ENCODE measurements at regions of chr15 and their contacts with region 1.

Region 1: GRCh38 chr15:66293419-66294156 is at the start of gene DIS3L:
- DNase-seq: peak; percentile 21 to 83 (median 60)
- ATAC-seq: peak; percentile 72
- H3K4me3 ChIP-seq: peak within 1 kb of the TSS; percentile 67 to 72
- H3K4me3 Mint-ChIP-seq: peak within 1 kb of the TSS; percentile 86
- H3K27ac ChIP-seq: peak within 1 kb of the TSS; percentile 86 to 95
- H3K27ac Mint-ChIP-seq: peak within 1 kb of the TSS; percentile 93
- H3K4me1 ChIP-seq: peaks cover 39% of the 10 kb centered on the region
- H3K4me1 Mint-ChIP-seq: peaks cover 49% of the 10 kb centered on the region
- H3K27me3 ChIP-seq: no peaks in the 10 kb centered on the region
- H3K27me3 Mint-ChIP-seq: no peaks in the 10 kb centered on the region
- CTCF ChIP-seq: no peak
- total RNA-seq, gene DIS3L: 16.6 to 18.8 TPM

Region 2: DNA sequence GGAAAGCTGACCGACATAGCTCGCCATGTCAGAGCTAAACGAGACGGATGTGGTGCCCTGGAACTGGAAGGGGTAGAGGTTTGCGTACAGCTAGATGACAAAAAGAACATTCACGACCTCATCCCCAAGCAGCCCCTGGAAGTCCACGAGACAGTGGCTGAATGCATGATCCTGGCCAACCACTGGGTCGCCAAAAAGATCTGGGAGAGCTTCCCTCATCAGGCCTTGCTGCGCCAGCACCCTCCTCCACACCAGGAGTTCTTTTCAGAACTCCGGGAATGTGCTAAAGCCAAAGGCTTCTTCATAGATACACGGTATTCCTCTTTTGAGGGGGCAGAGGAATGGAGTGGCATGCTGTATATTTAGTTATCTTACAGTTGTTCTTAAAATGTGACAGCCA is 32.5 kb after region 1 on chr15:
- CTCF ChIA-PET with region 1: no interaction called
- POLR2A ChIA-PET with region 1: no interaction called
- intact Hi-C with region 1: no loop called
- DNase-seq: no peak
- ATAC-seq: no peak
- H3K4me3 ChIP-seq: no peak overlapping the region
- H3K4me3 Mint-ChIP-seq: no peak overlapping the region
- H3K27ac ChIP-seq: no peak overlapping the region
- H3K27ac Mint-ChIP-seq: no peak overlapping the region
- H3K4me1 ChIP-seq: no peaks in the 10 kb centered on the region
- H3K4me1 Mint-ChIP-seq: no peaks in the 10 kb centered on the region
- H3K27me3 ChIP-seq: no peaks in the 10 kb centered on the region
- H3K27me3 Mint-ChIP-seq: no peaks in the 10 kb centered on the region
- CTCF ChIP-seq: no peak

Region 3: GRCh38 chr15:66356345-66357236 is 63.0 kb after region 1 on chr15 and contains the start of gene TIPIN:
- CTCF ChIA-PET with region 1: no interaction called
- POLR2A ChIA-PET with region 1: no interaction called
- intact Hi-C with region 1: loop called (anchors 2 to 5 kb)
- DNase-seq: peak; percentile 92 to 98 (median 97)
- ATAC-seq: peak; percentile 97
- H3K4me3 ChIP-seq: peak within 1 kb of the TSS; percentile 69 to 76
- H3K4me3 Mint-ChIP-seq: peak within 1 kb of the TSS; percentile 99
- H3K27ac ChIP-seq: peak within 1 kb of the TSS; percentile 50 to 69
- H3K27ac Mint-ChIP-seq: peak within 1 kb of the TSS; percentile 96
- H3K4me1 ChIP-seq: peaks cover 14% of the 10 kb centered on the region
- H3K4me1 Mint-ChIP-seq: peaks cover 19% of the 10 kb centered on the region
- H3K27me3 ChIP-seq: no peaks in the 10 kb centered on the region
- H3K27me3 Mint-ChIP-seq: no peaks in the 10 kb centered on the region
- CTCF ChIP-seq: no peak
- total RNA-seq, gene TIPIN: 4.8 to 4.9 TPM

Measured in CD8-positive, alpha-beta T cell (primary cell).